WTC11 (cell line): ENCODE measurements at regions of chr1 and their contacts with region 1.

Region 1: DNA sequence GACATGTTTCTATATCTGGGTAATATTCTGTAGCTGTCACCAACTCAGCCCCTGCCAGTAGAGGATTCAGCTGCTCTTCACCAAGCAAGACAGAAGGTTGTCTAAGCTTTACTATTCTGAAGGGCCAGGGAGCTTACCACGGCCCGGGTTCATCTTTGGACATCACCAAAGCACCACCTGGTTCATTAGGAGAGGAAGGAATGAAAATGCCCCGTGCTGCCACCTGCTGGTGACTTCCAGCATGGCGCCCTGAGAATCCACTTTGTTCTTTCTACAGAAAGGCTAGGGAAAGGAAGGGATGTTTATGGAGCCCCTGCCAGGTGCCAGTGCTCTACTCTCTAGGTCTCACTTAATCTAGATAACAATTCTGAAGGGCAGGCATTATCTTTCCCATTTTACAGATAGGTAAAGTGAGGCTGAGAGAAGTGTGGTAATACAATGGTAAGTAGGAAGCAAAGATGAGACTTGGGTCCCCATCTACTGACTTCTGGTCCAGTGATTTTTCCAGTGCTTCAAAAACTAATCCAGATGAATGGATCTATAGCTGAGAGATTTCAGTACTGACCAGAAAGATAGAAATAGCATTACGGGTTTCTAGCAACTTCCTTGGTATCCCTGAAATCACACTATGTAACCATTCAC is 79.5 kb downstream of the BEND5 start:
- DNase-seq: peak; percentile 85
- ATAC-seq: peak; percentile 80
- H3K4me3 Mint-ChIP-seq: no peak overlapping the region
- H3K27ac Mint-ChIP-seq: no peak overlapping the region
- H3K4me1 Mint-ChIP-seq: peaks cover 3% of the 10 kb centered on the region
- H3K27me3 Mint-ChIP-seq: no peaks in the 10 kb centered on the region
- CTCF ChIP-seq: peak; percentile 85

Region 2: GRCh38 chr1:48644905-48645605 is 52.1 kb before region 1 on chr1:
- CTCF ChIA-PET with region 1: no interaction called
- POLR2A ChIA-PET with region 1: no interaction called
- DNase-seq: no peak
- ATAC-seq: 0 out of 2 replicates have a peak, but pooled peaks have one; percentile 9
- H3K4me3 Mint-ChIP-seq: no peak overlapping the region
- H3K27ac Mint-ChIP-seq: no peak overlapping the region
- H3K4me1 Mint-ChIP-seq: peaks cover 25% of the 10 kb centered on the region
- H3K27me3 Mint-ChIP-seq: peaks cover 11% of the 10 kb centered on the region
- CTCF ChIP-seq: no peak

Region 3: GRCh38 chr1:48710318-48710717 is 13.1 kb after region 1 on chr1:
- CTCF ChIA-PET with region 1: interaction called, 10 read pairs
- POLR2A ChIA-PET with region 1: no interaction called
- DNase-seq: peak; percentile 17
- ATAC-seq: peak; percentile 93
- H3K4me3 Mint-ChIP-seq: no peak overlapping the region
- H3K27ac Mint-ChIP-seq: no peak overlapping the region
- H3K4me1 Mint-ChIP-seq: peaks cover 16% of the 10 kb centered on the region
- H3K27me3 Mint-ChIP-seq: no peaks in the 10 kb centered on the region
- CTCF ChIP-seq: no peak

Region 4: DNA sequence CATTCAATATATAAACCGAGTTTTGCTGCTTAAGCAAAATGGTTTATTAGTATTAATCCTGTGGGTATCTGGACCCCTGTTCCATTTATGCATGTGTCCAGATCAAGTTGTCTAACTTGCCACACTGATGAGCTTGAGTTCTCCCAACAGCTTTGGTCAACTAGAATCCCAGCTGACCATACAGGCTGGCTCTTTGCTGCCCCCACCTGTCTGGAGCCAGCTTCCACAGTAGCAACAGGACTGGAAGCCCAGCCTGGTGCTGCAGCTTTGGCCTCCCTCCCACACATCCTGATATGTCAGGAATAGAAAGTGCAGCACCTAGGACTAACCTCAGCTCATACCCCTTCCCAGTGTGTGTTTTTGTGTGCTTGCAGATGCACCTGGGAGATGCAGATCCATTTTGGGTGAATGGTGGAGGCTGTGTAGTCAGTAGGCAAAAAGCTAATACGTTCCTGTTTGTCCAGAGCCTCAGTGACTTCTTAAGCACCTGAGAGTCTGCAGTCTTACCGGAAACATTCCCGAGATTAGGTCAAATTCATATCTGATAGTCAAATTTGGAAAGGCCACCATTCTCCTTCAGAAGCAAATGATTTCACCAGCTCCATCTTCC is 120.4 kb after region 1 on chr1:
- CTCF ChIA-PET with region 1: interaction called, 10 read pairs
- POLR2A ChIA-PET with region 1: no interaction called
- DNase-seq: peak; percentile 75
- ATAC-seq: peak; percentile 100
- H3K4me3 Mint-ChIP-seq: no peak overlapping the region
- H3K27ac Mint-ChIP-seq: no peak overlapping the region
- H3K4me1 Mint-ChIP-seq: no peaks in the 10 kb centered on the region
- H3K27me3 Mint-ChIP-seq: no peaks in the 10 kb centered on the region
- CTCF ChIP-seq: peak; percentile 47